CD4-positive, alpha-beta memory T cell (primary cell): ENCODE measurements at regions of chr10 and their contacts with region 1.

Region 1: GRCh38 chr10:25016376-25017154 is at the start of gene THNSL1:
- DNase-seq: peak; percentile 95 to 99 (median 97)
- H3K4me3 ChIP-seq: peak within 1 kb of the TSS; percentile 30 to 76
- H3K4me3 Mint-ChIP-seq: peak within 1 kb of the TSS; percentile 88 to 97 (median 93)
- H3K27ac ChIP-seq: peak within 1 kb of the TSS; percentile 85
- H3K27ac Mint-ChIP-seq: peak within 1 kb of the TSS; percentile 96 to 99 (median 98)
- H3K4me1 ChIP-seq: peaks cover 22% of the 10 kb centered on the region
- H3K4me1 Mint-ChIP-seq: peaks cover 9 to 25% (median 17%) of the 10 kb centered on the region in 4 donors
- H3K27me3 ChIP-seq: no peaks in the 10 kb centered on the region
- H3K27me3 Mint-ChIP-seq: no peaks in the 10 kb centered on the region
- total RNA-seq, gene THNSL1: 6.7 to 7.5 TPM

Region 2: GRCh38 chr10:24617771-24618391 is 398.7 kb before region 1 on chr10:
- CTCF ChIA-PET with region 1: interaction called, 4 read pairs
- POLR2A ChIA-PET with region 1: interaction called, 30 read pairs
- intact Hi-C with region 1: no loop called
- DNase-seq: peak; percentile 32 to 47 (median 39)
- H3K4me3 ChIP-seq: no peak overlapping the region
- H3K4me3 Mint-ChIP-seq: no peak overlapping the region
- H3K27ac ChIP-seq: no peak overlapping the region
- H3K27ac Mint-ChIP-seq: peak overlapping the region in 2 of 7 donors; percentile 5 to 47
- H3K4me1 ChIP-seq: peaks cover 13% of the 10 kb centered on the region
- H3K4me1 Mint-ChIP-seq: peaks cover 16 to 31% (median 23%) of the 10 kb centered on the region in 4 donors
- H3K27me3 ChIP-seq: no peaks in the 10 kb centered on the region
- H3K27me3 Mint-ChIP-seq: no peaks in the 10 kb centered on the region

Region 3: GRCh38 chr10:24887855-24888231 is 128.7 kb before region 1 on chr10:
- CTCF ChIA-PET with region 1: interaction called, 5 read pairs
- POLR2A ChIA-PET with region 1: interaction called, 7 read pairs
- intact Hi-C with region 1: loop called (anchors 2 kb)
- DNase-seq: no peak
- H3K4me3 ChIP-seq: peak overlapping the region in 1 of 2 donors; percentile 44
- H3K4me3 Mint-ChIP-seq: peak overlapping the region in 7 of 8 donors; percentile 45 to 84 (median 72)
- H3K27ac ChIP-seq: peak overlapping the region; percentile 49
- H3K27ac Mint-ChIP-seq: peak overlapping the region; percentile 63 to 98 (median 90)
- H3K4me1 ChIP-seq: peaks cover 73% of the 10 kb centered on the region
- H3K4me1 Mint-ChIP-seq: peaks cover 38 to 79% (median 62%) of the 10 kb centered on the region in 4 donors
- H3K27me3 ChIP-seq: no peaks in the 10 kb centered on the region
- H3K27me3 Mint-ChIP-seq: no peaks in the 10 kb centered on the region

Region 4: GRCh38 chr10:24952707-24953645 is 63.6 kb before region 1 on chr10:
- CTCF ChIA-PET with region 1: no interaction called
- POLR2A ChIA-PET with region 1: interaction called, 3 read pairs
- intact Hi-C with region 1: loop called (anchors 2 kb)
- DNase-seq: peak; percentile 43 to 66 (median 49)
- H3K4me3 ChIP-seq: peak overlapping the region in 1 of 2 donors; percentile 59
- H3K4me3 Mint-ChIP-seq: peak overlapping the region; percentile 78 to 88 (median 84)
- H3K27ac ChIP-seq: peak overlapping the region; percentile 34
- H3K27ac Mint-ChIP-seq: peak overlapping the region; percentile 25 to 85 (median 66)
- H3K4me1 ChIP-seq: peaks cover 13% of the 10 kb centered on the region
- H3K4me1 Mint-ChIP-seq: peaks cover 13 to 37% (median 20%) of the 10 kb centered on the region in 4 donors
- H3K27me3 ChIP-seq: no peaks in the 10 kb centered on the region
- H3K27me3 Mint-ChIP-seq: no peaks in the 10 kb centered on the region

Region 5: DNA sequence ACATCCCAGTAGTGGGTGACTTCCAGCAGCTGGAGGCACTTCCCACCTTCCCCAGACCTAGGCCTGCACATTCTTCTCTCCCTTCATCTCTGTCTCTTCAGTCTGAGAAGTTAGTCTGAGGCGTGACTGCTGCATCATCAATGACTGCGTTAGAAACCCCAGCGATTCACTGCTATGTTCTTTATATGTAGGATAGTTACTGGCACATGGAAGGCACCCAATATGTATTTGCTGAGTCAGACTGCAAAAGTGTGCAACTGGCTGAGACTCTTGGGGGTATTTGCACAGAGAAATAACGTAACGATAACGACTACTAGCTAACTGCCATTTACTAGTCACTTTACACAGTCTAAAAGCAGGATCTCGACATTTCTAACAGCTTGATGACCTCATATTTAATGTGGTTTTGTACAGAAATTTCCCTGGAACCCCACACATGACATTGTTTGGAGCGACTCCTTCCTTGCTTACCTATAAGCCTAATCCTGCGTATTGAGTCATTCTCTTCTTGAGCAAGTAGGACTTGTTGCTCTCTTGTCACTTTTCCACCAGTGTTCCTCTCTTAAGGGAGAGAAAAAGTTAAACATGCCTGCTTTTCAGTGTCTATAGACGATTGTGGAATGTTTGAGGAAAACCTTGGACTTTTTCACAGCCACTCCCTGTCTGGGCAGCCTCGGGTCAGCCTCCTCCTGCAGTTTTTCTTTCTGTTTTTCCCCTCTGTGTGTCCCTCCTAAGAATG is 45.3 kb after region 1 on chr10:
- CTCF ChIA-PET with region 1: no interaction called
- POLR2A ChIA-PET with region 1: no interaction called
- intact Hi-C with region 1: loop called (anchors 1 kb)
- DNase-seq: no peak
- H3K4me3 ChIP-seq: no peak overlapping the region
- H3K4me3 Mint-ChIP-seq: peak overlapping the region in 7 of 8 donors; percentile 7 to 77 (median 63)
- H3K27ac ChIP-seq: no peak overlapping the region
- H3K27ac Mint-ChIP-seq: peak overlapping the region; percentile 67 to 94 (median 80)
- H3K4me1 ChIP-seq: peaks cover 14% of the 10 kb centered on the region
- H3K4me1 Mint-ChIP-seq: peaks cover 9 to 31% (median 17%) of the 10 kb centered on the region in 4 donors
- H3K27me3 ChIP-seq: no peaks in the 10 kb centered on the region
- H3K27me3 Mint-ChIP-seq: no peaks in the 10 kb centered on the region

Region 6: GRCh38 chr10:26448706-26449435 is 1432.3 kb after region 1 on chr10:
- CTCF ChIA-PET with region 1: no interaction called
- POLR2A ChIA-PET with region 1: no interaction called
- intact Hi-C with region 1: loop called (anchors 10 kb)
- DNase-seq: peak; percentile 87 to 91 (median 89)
- H3K4me3 ChIP-seq: peak overlapping the region; percentile 31 to 37
- H3K4me3 Mint-ChIP-seq: peak overlapping the region; percentile 76 to 89 (median 84)
- H3K27ac ChIP-seq: peak overlapping the region; percentile 68
- H3K27ac Mint-ChIP-seq: peak overlapping the region; percentile 92 to 99 (median 98)
- H3K4me1 ChIP-seq: peaks cover 95% of the 10 kb centered on the region
- H3K4me1 Mint-ChIP-seq: peaks cover 77 to 93% (median 85%) of the 10 kb centered on the region in 4 donors
- H3K27me3 ChIP-seq: no peaks in the 10 kb centered on the region
- H3K27me3 Mint-ChIP-seq: no peaks in the 10 kb centered on the region